ENCODE measurements at regions of chr5 and their contacts with region 1.

Region 1: GRCh38 chr5:140647042-140647341 is 438 bp downstream of the NDUFA2 start:
- DNase-seq: no peak
- ATAC-seq: no peak
- H3K4me3 ChIP-seq: peak overlapping the region; percentile 78 to 81
- H3K4me3 Mint-ChIP-seq: peak overlapping the region; percentile 99
- H3K27ac ChIP-seq: peak overlapping the region; percentile 96 to 97
- H3K27ac Mint-ChIP-seq: peak overlapping the region; percentile 99
- H3K4me1 ChIP-seq: peaks cover 34% of the 10 kb centered on the region
- H3K4me1 Mint-ChIP-seq: peaks cover 47% of the 10 kb centered on the region
- H3K27me3 ChIP-seq: no peaks in the 10 kb centered on the region
- H3K27me3 Mint-ChIP-seq: no peaks in the 10 kb centered on the region
- CTCF ChIP-seq: no peak

Region 2: GRCh38 chr5:140547508-140548299 is 99.3 kb before region 1 on chr5 and contains the start of gene EIF4EBP3:
- CTCF ChIA-PET with region 1: interaction called, 9 read pairs
- POLR2A ChIA-PET with region 1: interaction called, 42 read pairs
- intact Hi-C with region 1: loop called in 1 of 2 experiments (anchors 1 kb)
- DNase-seq: peak; percentile 74 to 94 (median 88)
- ATAC-seq: peak; percentile 97
- H3K4me3 ChIP-seq: peak within 1 kb of the TSS; percentile 69 to 96
- H3K4me3 Mint-ChIP-seq: peak within 1 kb of the TSS; percentile 90
- H3K27ac ChIP-seq: peak within 1 kb of the TSS; percentile 88 to 96
- H3K27ac Mint-ChIP-seq: peak within 1 kb of the TSS; percentile 98
- H3K4me1 ChIP-seq: peaks cover 21% of the 10 kb centered on the region
- H3K4me1 Mint-ChIP-seq: peaks cover 31% of the 10 kb centered on the region
- H3K27me3 ChIP-seq: no peaks in the 10 kb centered on the region
- H3K27me3 Mint-ChIP-seq: no peaks in the 10 kb centered on the region
- CTCF ChIP-seq: peak; percentile 72
- total RNA-seq, gene EIF4EBP3: 10.6 to 13.7 TPM

Region 3: GRCh38 chr5:140632150-140633020 is 14.6 kb before region 1 on chr5:
- CTCF ChIA-PET with region 1: interaction called, 14 read pairs
- POLR2A ChIA-PET with region 1: interaction called, 29 read pairs
- intact Hi-C with region 1: loop called in 1 of 2 experiments (anchors 2 kb)
- DNase-seq: peak in 8 of 9 experiments; percentile 20 to 74 (median 52)
- ATAC-seq: peak; percentile 80
- H3K4me3 ChIP-seq: peak overlapping the region; percentile 53 to 84
- H3K4me3 Mint-ChIP-seq: peak overlapping the region; percentile 90
- H3K27ac ChIP-seq: peak overlapping the region in 1 of 2 experiments; percentile 48
- H3K27ac Mint-ChIP-seq: peak overlapping the region; percentile 74
- H3K4me1 ChIP-seq: peaks cover 15% of the 10 kb centered on the region
- H3K4me1 Mint-ChIP-seq: peaks cover 26% of the 10 kb centered on the region
- H3K27me3 ChIP-seq: no peaks in the 10 kb centered on the region
- H3K27me3 Mint-ChIP-seq: peaks cover 8% of the 10 kb centered on the region
- CTCF ChIP-seq: no peak

Region 4: GRCh38 chr5:140690941-140691924 is 44.2 kb after region 1 on chr5 and contains the starts of genes HARS1 and HARS2:
- CTCF ChIA-PET with region 1: interaction called, 4 read pairs
- POLR2A ChIA-PET with region 1: interaction called, 18 read pairs
- intact Hi-C with region 1: loop called (anchors 1 to 5 kb)
- DNase-seq: peak; percentile 58 to 92 (median 83)
- ATAC-seq: peak; percentile 88
- H3K4me3 ChIP-seq: peak within 1 kb of the TSS; percentile 84 to 94
- H3K4me3 Mint-ChIP-seq: peak within 1 kb of the TSS; percentile 99
- H3K27ac ChIP-seq: peak within 1 kb of the TSS; percentile 77 to 87
- H3K27ac Mint-ChIP-seq: peak within 1 kb of the TSS; percentile 98
- H3K4me1 ChIP-seq: peaks cover 23% of the 10 kb centered on the region
- H3K4me1 Mint-ChIP-seq: peaks cover 48% of the 10 kb centered on the region
- H3K27me3 ChIP-seq: no peaks in the 10 kb centered on the region
- H3K27me3 Mint-ChIP-seq: no peaks in the 10 kb centered on the region
- CTCF ChIP-seq: no peak
- total RNA-seq, gene HARS1: 67.3 to 70.2 TPM
- total RNA-seq, gene HARS2: 41.3 to 43.2 TPM

Region 5: GRCh38 chr5:140710899-140711552 is 64.0 kb after region 1 on chr5:
- CTCF ChIA-PET with region 1: no interaction called
- POLR2A ChIA-PET with region 1: interaction called, 23 read pairs
- intact Hi-C with region 1: loop called in 1 of 2 experiments (anchors 1 kb)
- DNase-seq: peak; percentile 66 to 95 (median 85)
- ATAC-seq: peak; percentile 83
- H3K4me3 ChIP-seq: peak overlapping the region; percentile 58 to 74
- H3K4me3 Mint-ChIP-seq: peak overlapping the region; percentile 99
- H3K27ac ChIP-seq: peak overlapping the region; percentile 72 to 86
- H3K27ac Mint-ChIP-seq: peak overlapping the region; percentile 99
- H3K4me1 ChIP-seq: no peaks in the 10 kb centered on the region
- H3K4me1 Mint-ChIP-seq: peaks cover 16% of the 10 kb centered on the region
- H3K27me3 ChIP-seq: no peaks in the 10 kb centered on the region
- H3K27me3 Mint-ChIP-seq: no peaks in the 10 kb centered on the region
- CTCF ChIP-seq: no peak

Region 6: DNA sequence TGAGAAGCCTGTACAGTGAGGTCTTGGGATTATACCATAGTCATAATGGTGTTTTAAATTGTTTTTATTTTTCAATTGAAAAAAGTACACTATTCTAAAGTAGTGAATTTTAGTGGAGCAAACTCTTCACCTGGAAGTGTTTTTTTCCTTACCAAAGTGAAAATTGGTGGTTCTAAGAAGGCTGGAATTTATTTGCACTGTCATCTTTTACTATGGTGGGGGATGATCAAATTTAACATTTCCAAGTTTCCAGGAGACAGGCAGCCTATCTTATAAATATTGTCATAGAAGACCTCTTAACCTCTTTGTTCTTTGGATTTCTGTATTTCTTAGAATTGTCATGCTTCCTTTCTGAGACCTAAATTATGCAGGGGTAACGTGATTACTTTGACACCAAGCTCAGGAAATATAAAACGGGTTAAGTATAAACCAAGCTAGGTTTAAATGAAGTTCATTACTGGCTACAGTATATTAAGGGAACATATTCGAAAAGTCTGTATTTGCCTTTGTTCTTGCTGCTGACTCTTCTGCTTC is 1481.8 kb after region 1 on chr5:
- CTCF ChIA-PET with region 1: no interaction called
- POLR2A ChIA-PET with region 1: no interaction called
- intact Hi-C with region 1: no loop called
- DNase-seq: peak in 2 of 9 experiments; percentile 17 to 44
- ATAC-seq: peak; percentile 41
- H3K4me3 ChIP-seq: peak overlapping the region in 1 of 2 experiments; percentile 20
- H3K4me3 Mint-ChIP-seq: peak overlapping the region; percentile 8
- H3K27ac ChIP-seq: no peak overlapping the region
- H3K27ac Mint-ChIP-seq: peak overlapping the region; percentile 58
- H3K4me1 ChIP-seq: peaks cover 64% of the 10 kb centered on the region
- H3K4me1 Mint-ChIP-seq: peaks cover 75% of the 10 kb centered on the region
- H3K27me3 ChIP-seq: no peaks in the 10 kb centered on the region
- H3K27me3 Mint-ChIP-seq: no peaks in the 10 kb centered on the region
- CTCF ChIP-seq: no peak